ENCODE measurements at regions of chr12 and their contacts with region 1.

Region 1: GRCh38 chr12:103441437-103442181 is 54.2 kb downstream of the C12orf42 start:
- DNase-seq: peak; percentile 87
- H3K4me3 Mint-ChIP-seq: peak overlapping the region; percentile 81
- H3K27ac Mint-ChIP-seq: peak overlapping the region; percentile 89
- H3K4me1 Mint-ChIP-seq: peaks cover 13% of the 10 kb centered on the region
- H3K27me3 Mint-ChIP-seq: no peaks in the 10 kb centered on the region

Region 2: GRCh38 chr12:103269946-103270345 is 171.7 kb before region 1 on chr12:
- intact Hi-C with region 1: loop called (anchors 5 kb)
- DNase-seq: no peak
- H3K4me3 Mint-ChIP-seq: no peak overlapping the region
- H3K27ac Mint-ChIP-seq: no peak overlapping the region
- H3K4me1 Mint-ChIP-seq: peaks cover 22% of the 10 kb centered on the region
- H3K27me3 Mint-ChIP-seq: no peaks in the 10 kb centered on the region

Region 3: GRCh38 chr12:103455020-103455763 is 13.6 kb after region 1 on chr12:
- intact Hi-C with region 1: loop called (anchors 1 kb)
- DNase-seq: peak; percentile 77
- H3K4me3 Mint-ChIP-seq: peak overlapping the region; percentile 9
- H3K27ac Mint-ChIP-seq: peak overlapping the region; percentile 63
- H3K4me1 Mint-ChIP-seq: peaks cover 47% of the 10 kb centered on the region
- H3K27me3 Mint-ChIP-seq: no peaks in the 10 kb centered on the region

Region 4: GRCh38 chr12:103495479-103496456 is 54.2 kb after region 1 on chr12 and contains the start of gene C12orf42:
- intact Hi-C with region 1: loop called (anchors 1 kb)
- DNase-seq: peak; percentile 86
- H3K4me3 Mint-ChIP-seq: peak within 1 kb of the TSS; percentile 68
- H3K27ac Mint-ChIP-seq: peak within 1 kb of the TSS; percentile 72
- H3K4me1 Mint-ChIP-seq: peaks cover 25% of the 10 kb centered on the region
- H3K27me3 Mint-ChIP-seq: peaks cover 39% of the 10 kb centered on the region
- total RNA-seq, gene C12orf42: not detected in 2 replicates

Region 5: DNA sequence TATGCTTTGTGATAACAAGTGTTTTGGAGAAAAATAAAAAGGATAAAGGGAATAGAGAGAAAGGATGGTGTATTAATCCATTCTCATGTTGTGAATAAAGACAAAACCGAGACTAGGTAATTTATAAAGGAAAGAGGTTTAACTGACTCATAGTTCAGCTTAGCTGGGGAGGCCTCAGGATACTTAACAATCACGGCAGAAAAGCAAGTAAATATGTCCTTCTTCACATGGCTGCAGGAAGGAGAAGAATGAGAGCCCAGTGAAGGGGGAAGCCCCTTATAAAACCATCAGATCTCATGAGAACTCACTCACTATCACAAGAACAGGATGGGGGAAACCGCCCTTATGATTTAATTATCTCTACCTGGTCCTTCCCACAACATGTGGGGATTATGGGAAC is 72.3 kb after region 1 on chr12:
- intact Hi-C with region 1: no loop called
- DNase-seq: no peak
- H3K4me3 Mint-ChIP-seq: no peak overlapping the region
- H3K27ac Mint-ChIP-seq: no peak overlapping the region
- H3K4me1 Mint-ChIP-seq: peaks cover 2% of the 10 kb centered on the region
- H3K27me3 Mint-ChIP-seq: peaks cover 8% of the 10 kb centered on the region

Region 6: DNA sequence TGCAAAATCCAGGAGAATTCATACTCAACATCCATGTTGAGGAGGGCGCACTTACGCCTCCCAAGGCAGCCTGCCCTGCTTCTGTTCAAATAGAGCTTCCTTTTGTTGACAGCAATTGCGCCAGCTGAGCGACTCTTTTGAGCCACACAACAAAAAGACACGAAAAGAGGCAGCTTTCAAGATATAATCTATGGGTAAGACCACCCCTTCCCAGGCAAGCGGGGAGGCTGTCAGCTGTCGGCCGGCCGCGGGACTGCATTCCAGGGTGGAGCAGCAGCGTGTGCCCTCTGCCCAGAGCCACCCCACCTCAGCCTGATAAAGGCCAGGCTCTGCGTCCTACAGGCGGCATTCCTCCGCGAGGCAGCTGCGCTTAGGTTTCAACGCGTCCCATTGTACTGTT is 129.7 kb after region 1 on chr12:
- intact Hi-C with region 1: no loop called
- DNase-seq: no peak
- H3K4me3 Mint-ChIP-seq: no peak overlapping the region
- H3K27ac Mint-ChIP-seq: no peak overlapping the region
- H3K4me1 Mint-ChIP-seq: peaks cover 3% of the 10 kb centered on the region
- H3K27me3 Mint-ChIP-seq: peaks cover 55% of the 10 kb centered on the region